MCF 10A (cell line): ENCODE measurements at regions of chr1 and their contacts with region 1.

Region 1: GRCh38 chr1:47710329-47711071 is 272.7 kb downstream of the FOXD2 start:
- DNase-seq: peak; percentile 47
- H3K4me3 Mint-ChIP-seq: no peak overlapping the region
- H3K27ac Mint-ChIP-seq: no peak overlapping the region
- H3K4me1 Mint-ChIP-seq: no peaks in the 10 kb centered on the region
- H3K27me3 Mint-ChIP-seq: peaks cover 54% of the 10 kb centered on the region
- CTCF ChIP-seq: peak; percentile 99

Region 2: GRCh38 chr1:47432071-47433036 is 278.1 kb before region 1 on chr1:
- CTCF ChIA-PET with region 1: interaction called, 696 read pairs
- POLR2A ChIA-PET with region 1: interaction called, 8 read pairs
- intact Hi-C with region 1: loop called (anchors 1 kb)
- DNase-seq: peak; percentile 89
- H3K4me3 Mint-ChIP-seq: peak overlapping the region; percentile 48
- H3K27ac Mint-ChIP-seq: peak overlapping the region; percentile 14
- H3K4me1 Mint-ChIP-seq: peaks cover 37% of the 10 kb centered on the region
- H3K27me3 Mint-ChIP-seq: no peaks in the 10 kb centered on the region
- CTCF ChIP-seq: peak; percentile 87

Region 3: GRCh38 chr1:47449822-47450552 is 260.5 kb before region 1 on chr1:
- CTCF ChIA-PET with region 1: interaction called, 4 read pairs
- POLR2A ChIA-PET with region 1: no interaction called
- intact Hi-C with region 1: loop called (anchors 5 kb)
- DNase-seq: peak; percentile 17
- H3K4me3 Mint-ChIP-seq: no peak overlapping the region
- H3K27ac Mint-ChIP-seq: no peak overlapping the region
- H3K4me1 Mint-ChIP-seq: no peaks in the 10 kb centered on the region
- H3K27me3 Mint-ChIP-seq: peaks cover 42% of the 10 kb centered on the region
- CTCF ChIP-seq: peak; percentile 39

Region 4: DNA sequence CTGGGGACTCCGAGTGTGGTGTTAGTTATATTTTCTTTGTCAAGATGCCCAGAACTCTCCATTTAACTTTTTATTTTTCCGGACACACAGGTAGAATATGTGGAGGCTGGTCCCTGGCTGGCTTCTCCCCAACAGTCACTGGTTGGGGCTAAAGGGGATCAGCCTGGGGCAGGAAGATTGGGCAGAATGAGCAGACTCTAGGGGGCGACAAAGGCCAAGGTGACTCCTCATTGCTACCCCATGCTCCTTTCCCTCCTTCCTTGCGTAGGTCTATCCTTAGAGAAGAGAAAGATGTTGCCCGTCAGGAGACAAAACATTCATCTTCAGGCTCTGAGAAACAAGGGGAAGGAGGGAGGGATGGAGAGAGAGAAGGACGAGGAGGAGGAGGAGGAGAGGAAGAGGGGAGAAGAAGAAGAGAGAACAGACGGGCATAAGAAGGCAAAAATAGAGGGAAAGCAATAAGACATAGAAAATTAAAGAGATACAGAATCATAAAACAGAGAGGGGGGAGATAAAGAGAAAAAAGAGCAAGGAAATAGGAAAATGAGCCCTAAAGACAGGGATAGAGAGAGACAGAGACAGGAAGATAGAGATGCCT is 182.7 kb before region 1 on chr1:
- CTCF ChIA-PET with region 1: interaction called, 32 read pairs
- POLR2A ChIA-PET with region 1: no interaction called
- intact Hi-C with region 1: loop called (anchors 1 kb)
- DNase-seq: peak; percentile 51
- H3K4me3 Mint-ChIP-seq: no peak overlapping the region
- H3K27ac Mint-ChIP-seq: no peak overlapping the region
- H3K4me1 Mint-ChIP-seq: no peaks in the 10 kb centered on the region
- H3K27me3 Mint-ChIP-seq: no peaks in the 10 kb centered on the region
- CTCF ChIP-seq: peak; percentile 46

Region 5: GRCh38 chr1:47696740-47697441 is 13.6 kb before region 1 on chr1:
- CTCF ChIA-PET with region 1: interaction called, 18 read pairs
- POLR2A ChIA-PET with region 1: no interaction called
- intact Hi-C with region 1: no loop called
- DNase-seq: no peak
- H3K4me3 Mint-ChIP-seq: no peak overlapping the region
- H3K27ac Mint-ChIP-seq: no peak overlapping the region
- H3K4me1 Mint-ChIP-seq: no peaks in the 10 kb centered on the region
- H3K27me3 Mint-ChIP-seq: no peaks in the 10 kb centered on the region
- CTCF ChIP-seq: no peak